ENCODE measurements at regions of chr9 and their contacts with region 1.

Region 1: DNA sequence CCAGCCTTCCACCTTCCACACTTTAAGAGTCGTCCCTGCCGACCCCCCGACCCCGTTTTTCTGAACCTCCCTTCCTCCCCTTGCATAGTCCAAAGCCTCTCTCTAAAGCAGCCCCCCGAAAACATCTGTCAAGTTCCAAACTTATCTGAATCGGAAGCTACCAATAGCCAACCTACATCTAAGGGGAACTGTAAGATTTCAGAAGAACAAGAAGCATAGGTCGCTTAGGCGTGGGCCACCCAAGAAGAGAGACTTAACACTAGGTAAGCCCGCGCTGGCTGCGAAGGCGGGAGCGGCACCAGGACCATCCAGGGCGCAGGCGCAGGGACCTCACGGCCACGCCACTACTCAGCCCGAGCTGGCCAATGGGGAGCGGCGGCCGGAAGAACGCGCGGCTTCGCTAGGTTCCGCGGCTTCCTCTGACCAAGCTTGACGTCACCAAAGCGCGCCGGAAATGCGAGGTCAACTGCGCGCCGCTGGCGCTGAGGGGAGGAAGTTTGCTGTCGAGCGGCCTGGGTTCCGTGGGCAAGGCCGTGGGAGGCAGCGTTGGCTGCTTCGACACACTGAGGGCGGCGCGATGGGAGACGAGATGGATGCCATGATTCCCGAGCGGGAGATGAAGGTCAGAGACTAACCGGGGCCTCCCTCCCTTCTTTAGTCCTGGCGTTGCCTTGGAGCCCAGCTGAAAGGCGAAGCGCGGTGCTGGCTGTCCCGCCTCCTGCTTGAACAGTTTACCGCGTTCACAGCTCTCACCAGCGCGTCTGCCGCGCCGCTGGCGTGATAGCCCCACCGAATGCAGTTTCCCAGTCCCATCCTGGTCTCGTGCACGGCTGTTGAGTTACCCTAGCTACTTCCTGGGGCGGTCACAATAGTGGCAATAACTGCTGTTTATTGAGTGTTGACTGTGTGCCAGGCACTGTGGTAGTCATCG is at the start of gene NUP214:
- DNase-seq: peak; percentile 99
- H3K4me3 Mint-ChIP-seq: peak within 1 kb of the TSS; percentile 91
- H3K27ac Mint-ChIP-seq: peak within 1 kb of the TSS; percentile 91
- H3K4me1 Mint-ChIP-seq: peaks cover 30% of the 10 kb centered on the region
- H3K27me3 Mint-ChIP-seq: no peaks in the 10 kb centered on the region
- total RNA-seq, gene NUP214: 77.7 and 80.7 TPM in 2 replicates

Region 2: GRCh38 chr9:130712564-130713285 is 412.7 kb before region 1 on chr9:
- intact Hi-C with region 1: loop called (anchors 1 kb)
- DNase-seq: peak; percentile 94
- H3K4me3 Mint-ChIP-seq: peak overlapping the region; percentile 95
- H3K27ac Mint-ChIP-seq: peak overlapping the region; percentile 87
- H3K4me1 Mint-ChIP-seq: peaks cover 30% of the 10 kb centered on the region
- H3K27me3 Mint-ChIP-seq: no peaks in the 10 kb centered on the region

Region 3: GRCh38 chr9:131049829-131050715 is 75.3 kb before region 1 on chr9:
- intact Hi-C with region 1: no loop called
- DNase-seq: no peak
- H3K4me3 Mint-ChIP-seq: no peak overlapping the region
- H3K27ac Mint-ChIP-seq: no peak overlapping the region
- H3K4me1 Mint-ChIP-seq: no peaks in the 10 kb centered on the region
- H3K27me3 Mint-ChIP-seq: peaks cover 2% of the 10 kb centered on the region

Region 4: DNA sequence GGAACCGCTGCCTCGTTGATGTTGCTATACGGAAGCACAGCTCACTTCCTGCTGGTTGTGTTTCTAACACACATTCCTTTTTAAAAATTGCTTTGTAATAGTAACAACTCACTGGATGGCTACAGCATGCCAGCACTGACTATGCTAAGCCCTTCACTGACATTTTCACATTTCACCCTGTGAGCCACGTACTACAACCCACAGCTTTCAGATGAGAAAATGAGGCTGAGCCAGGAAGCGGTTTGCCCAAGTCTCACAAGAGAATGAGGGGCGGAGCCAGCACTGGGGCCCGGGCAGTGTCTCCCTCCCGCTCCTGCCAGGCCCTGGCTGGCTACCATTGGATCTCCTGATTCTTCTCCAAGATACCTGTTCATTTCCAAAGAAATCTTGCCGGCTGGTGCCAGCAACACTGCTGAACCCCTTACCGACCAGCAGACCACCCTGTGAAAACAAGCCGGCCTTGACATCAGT is 112.6 kb after region 1 on chr9:
- intact Hi-C with region 1: loop called (anchors 5 kb)
- DNase-seq: peak; percentile 82
- H3K4me3 Mint-ChIP-seq: peak overlapping the region; percentile 58
- H3K27ac Mint-ChIP-seq: peak overlapping the region; percentile 90
- H3K4me1 Mint-ChIP-seq: peaks cover 35% of the 10 kb centered on the region
- H3K27me3 Mint-ChIP-seq: no peaks in the 10 kb centered on the region

Region 5: DNA sequence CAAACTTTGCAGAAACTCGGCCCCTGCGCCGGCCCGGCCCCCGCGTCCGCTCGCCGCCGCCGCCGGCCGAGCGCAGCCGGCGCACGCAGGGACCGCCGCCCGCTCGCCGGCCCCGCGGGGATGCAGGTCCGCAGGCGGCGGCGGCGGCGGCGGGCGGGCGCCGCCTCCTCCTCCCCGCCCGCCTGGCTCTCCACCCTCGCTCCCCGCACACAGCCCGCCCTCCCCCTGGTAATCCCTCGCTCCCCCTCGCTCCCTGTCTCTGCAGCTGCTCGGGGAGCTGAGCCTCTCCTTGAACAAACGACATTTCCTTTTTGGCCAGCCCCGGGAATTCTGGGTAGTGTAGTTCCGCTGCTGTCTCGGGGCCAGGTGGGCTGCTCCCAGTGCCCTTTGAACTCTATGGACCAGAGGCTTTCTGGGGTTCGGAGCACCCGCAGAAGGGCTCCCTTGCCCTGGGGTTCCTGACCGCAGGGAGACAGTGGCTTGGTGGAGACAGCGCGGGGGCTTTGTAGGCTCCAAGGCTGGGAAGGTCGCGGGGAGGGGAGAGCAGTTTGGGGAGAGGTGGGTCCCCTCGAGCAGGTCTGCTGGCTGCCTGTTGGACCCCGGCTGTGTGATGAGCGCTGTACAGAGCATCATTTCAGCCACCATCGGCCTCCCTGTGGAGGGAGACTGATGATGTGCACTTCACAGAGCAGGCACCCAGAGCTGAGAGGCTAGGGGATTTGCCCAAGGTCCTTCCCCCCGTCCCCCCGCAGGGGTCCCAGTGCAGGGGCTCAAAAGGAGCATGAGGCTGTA is 152.7 kb after region 1 on chr9:
- intact Hi-C with region 1: loop called (anchors 2 kb)
- DNase-seq: peak; percentile 63
- H3K4me3 Mint-ChIP-seq: peak overlapping the region; percentile 86
- H3K27ac Mint-ChIP-seq: peak overlapping the region; percentile 93
- H3K4me1 Mint-ChIP-seq: peaks cover 30% of the 10 kb centered on the region
- H3K27me3 Mint-ChIP-seq: peaks cover 16% of the 10 kb centered on the region

Region 6: GRCh38 chr9:131502781-131503625 is 377.6 kb after region 1 on chr9 and contains the start of gene POMT1:
- intact Hi-C with region 1: loop called (anchors 2 kb)
- DNase-seq: peak; percentile 90
- H3K4me3 Mint-ChIP-seq: peak within 1 kb of the TSS; percentile 93
- H3K27ac Mint-ChIP-seq: peak within 1 kb of the TSS; percentile 90
- H3K4me1 Mint-ChIP-seq: peaks cover 48% of the 10 kb centered on the region
- H3K27me3 Mint-ChIP-seq: no peaks in the 10 kb centered on the region
- total RNA-seq, gene POMT1: 39.1 and 39.3 TPM in 2 replicates

Region 7: DNA sequence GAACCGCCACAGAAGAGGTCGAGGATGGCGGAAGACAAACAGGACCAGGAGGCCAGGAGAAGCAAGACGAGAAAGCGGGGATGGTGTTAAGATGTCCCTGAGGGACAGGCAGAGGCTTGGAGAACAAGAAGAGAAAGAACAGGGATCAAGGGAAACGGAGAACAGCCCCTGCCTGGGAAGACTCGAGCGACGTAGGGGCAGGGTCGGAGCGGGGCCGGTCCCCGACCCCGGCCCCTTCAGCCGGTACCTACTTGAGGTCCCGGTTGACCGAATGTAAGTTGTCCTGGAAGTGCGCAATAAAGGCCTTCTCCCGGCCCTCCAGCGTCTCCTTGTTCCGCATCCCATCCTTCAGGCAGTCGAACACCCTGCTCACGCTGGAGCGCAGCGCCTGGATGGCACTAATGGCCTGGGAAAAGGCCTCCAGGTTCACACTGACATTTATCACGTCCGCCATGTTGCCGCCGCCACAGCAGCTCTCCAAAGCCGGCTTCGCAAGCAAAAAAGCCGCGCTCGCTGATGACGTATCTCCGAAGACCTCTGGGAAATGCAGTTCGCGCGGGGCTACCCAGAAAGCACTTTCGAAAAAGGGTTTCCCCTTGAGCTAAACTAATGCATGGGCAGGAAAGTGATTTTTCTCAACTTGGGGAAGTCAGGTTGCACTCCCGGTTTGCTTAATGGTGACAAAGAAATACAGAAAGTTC is 954.1 kb after region 1 on chr9 and contains the start of gene MED27:
- intact Hi-C with region 1: loop called (anchors 5 kb)
- DNase-seq: peak; percentile 90
- H3K4me3 Mint-ChIP-seq: peak within 1 kb of the TSS; percentile 98
- H3K27ac Mint-ChIP-seq: peak within 1 kb of the TSS; percentile 94
- H3K4me1 Mint-ChIP-seq: peaks cover 45% of the 10 kb centered on the region
- H3K27me3 Mint-ChIP-seq: peaks cover 8% of the 10 kb centered on the region
- total RNA-seq, gene MED27: 41.0 and 45.6 TPM in 2 replicates